BJ (cell line): ENCODE measurements at regions of chr1 and their contacts with region 1.

Region 1: GRCh38 chr1:32892368-32893197 is 6.3 kb downstream of the HPCA start:
- DNase-seq: no peak
- H3K4me3 ChIP-seq: peak overlapping the region; percentile 37
- H3K27me3 ChIP-seq: peaks cover 8% of the 10 kb centered on the region
- CTCF ChIP-seq: peak; percentile 29; the same call in 1 of the 2 replicates

Region 2: DNA sequence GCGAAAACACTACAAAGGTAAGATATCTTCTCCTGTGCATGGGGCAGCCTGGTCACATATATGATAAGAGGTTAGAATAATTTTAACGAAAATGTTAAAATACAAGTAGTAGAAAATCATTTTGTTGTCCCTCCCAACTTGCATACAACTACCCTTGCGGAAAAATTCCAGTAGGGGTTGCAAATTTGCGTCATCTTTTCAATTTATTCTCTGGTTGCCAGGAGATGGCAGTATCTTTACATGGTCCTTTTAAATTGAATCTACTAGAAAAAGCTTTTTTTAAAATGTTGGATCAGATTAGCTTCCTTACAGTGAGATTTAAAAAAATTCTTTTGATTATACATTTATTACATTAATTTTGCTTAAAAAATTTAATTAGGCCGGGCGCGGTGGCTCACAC is 64.2 kb before region 1 on chr1:
- CTCF ChIA-PET with region 1: no interaction called
- POLR2A ChIA-PET with region 1: no interaction called
- DNase-seq: no peak
- H3K4me3 ChIP-seq: no peak overlapping the region
- H3K27me3 ChIP-seq: no peaks in the 10 kb centered on the region
- CTCF ChIP-seq: no peak

Region 3: GRCh38 chr1:32870615-32871363 is 21.8 kb before region 1 on chr1 and contains the start of gene FNDC5:
- CTCF ChIA-PET with region 1: interaction called, 43 read pairs
- POLR2A ChIA-PET with region 1: interaction called, 12 read pairs
- DNase-seq: no peak
- H3K4me3 ChIP-seq: peak within 1 kb of the TSS; percentile 40
- H3K27me3 ChIP-seq: peaks cover 7% of the 10 kb centered on the region
- CTCF ChIP-seq: 0 out of 2 replicates have a peak, but pooled peaks have one; percentile 1
- polyA plus RNA-seq, gene FNDC5: 1.1 and 1.2 TPM in 2 replicates

Region 4: DNA sequence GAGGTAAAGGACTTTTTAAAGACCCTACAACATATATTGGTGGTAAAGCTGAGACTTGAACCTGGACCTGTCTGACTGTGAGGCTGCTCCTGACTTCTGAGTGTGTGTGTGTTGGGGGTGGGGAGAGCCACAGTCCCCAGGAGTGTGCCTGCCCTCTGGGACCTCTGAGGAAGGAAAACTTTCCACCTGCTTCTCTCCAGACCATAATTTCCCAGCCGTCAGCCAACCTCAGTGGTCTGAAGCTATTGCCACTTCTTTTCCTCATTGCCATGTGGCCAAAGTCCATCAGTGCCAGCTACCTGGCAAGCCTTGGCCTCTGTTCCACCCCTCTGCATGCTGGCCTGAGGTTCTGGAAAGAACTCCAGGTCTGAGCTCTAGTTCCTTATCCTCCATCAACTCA is 11.8 kb after region 1 on chr1:
- CTCF ChIA-PET with region 1: interaction called, 13 read pairs
- POLR2A ChIA-PET with region 1: no interaction called
- DNase-seq: no peak
- H3K4me3 ChIP-seq: no peak overlapping the region
- H3K27me3 ChIP-seq: no peaks in the 10 kb centered on the region; the same call in 1 of the 2 replicates
- CTCF ChIP-seq: no peak